ENCODE measurements at regions of chr1 and their contacts with region 1.

Region 1: DNA sequence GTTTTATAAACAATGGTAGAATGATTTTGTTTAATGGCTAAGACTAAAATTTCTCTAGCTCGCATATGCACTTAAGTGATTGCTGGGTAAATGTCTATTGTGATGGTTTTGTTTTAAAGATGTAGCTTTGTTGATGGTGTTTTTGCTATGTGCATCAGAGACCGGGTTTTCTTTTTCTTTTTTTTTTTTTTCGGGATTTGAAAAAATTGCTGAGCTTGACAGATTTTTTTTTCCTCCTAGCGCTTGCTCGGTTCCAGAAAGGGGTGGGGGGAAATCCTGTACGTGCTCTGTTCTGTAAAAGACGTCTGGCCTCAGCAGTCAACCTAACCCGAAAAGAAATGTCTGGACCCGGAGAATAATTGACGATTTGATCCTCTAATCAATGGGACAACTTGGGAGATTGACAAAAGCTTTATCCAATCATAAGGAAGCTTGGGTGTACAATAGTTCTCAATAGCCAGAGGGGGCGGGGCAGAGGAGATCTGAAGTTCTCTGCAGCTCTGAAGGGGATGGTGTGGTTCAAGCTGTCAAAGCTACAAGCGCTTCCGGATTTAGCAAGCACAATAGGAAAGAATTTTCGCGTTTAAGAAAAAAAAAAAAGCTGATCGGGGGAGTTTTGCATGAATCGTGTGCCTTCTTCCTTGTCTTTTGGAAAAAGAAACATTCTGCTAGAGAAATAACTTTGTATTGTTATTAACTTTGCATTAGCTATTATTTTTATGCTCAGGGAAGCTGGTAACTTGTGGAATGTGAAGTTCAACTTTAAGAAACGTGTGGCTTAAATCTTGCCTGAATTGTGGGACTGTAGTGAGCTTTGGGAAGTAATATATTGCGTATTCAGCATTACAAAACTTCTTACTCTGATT is 4.5 kb upstream of the NFIA start:
- DNase-seq: peak; percentile 84 to 88
- ATAC-seq: peak; percentile 47 to 55
- H3K4me3 ChIP-seq: peak overlapping the region; percentile 58 to 96 (median 73)
- H3K27ac ChIP-seq: peak overlapping the region; percentile 82 to 96 (median 92)
- H3K4me1 ChIP-seq: peaks cover 32 to 39% of the 10 kb centered on the region in 2 donors
- H3K27me3 ChIP-seq: no peaks in the 10 kb centered on the region
- CTCF ChIP-seq: no peak
- POLR2A ChIP-seq: peak in 1 of 2 donors; percentile 17

Region 2: GRCh38 chr1:60255565-60255964 is 822.3 kb before region 1 on chr1:
- in situ Hi-C with region 1: no loop called
- intact Hi-C with region 1: no loop called
- DNase-seq: no peak
- ATAC-seq: no peak
- H3K4me3 ChIP-seq: no peak overlapping the region
- H3K27ac ChIP-seq: no peak overlapping the region
- H3K4me1 ChIP-seq: no peaks in the 10 kb centered on the region
- H3K27me3 ChIP-seq: no peaks in the 10 kb centered on the region
- CTCF ChIP-seq: no peak
- POLR2A ChIP-seq: no peak

Region 3: DNA sequence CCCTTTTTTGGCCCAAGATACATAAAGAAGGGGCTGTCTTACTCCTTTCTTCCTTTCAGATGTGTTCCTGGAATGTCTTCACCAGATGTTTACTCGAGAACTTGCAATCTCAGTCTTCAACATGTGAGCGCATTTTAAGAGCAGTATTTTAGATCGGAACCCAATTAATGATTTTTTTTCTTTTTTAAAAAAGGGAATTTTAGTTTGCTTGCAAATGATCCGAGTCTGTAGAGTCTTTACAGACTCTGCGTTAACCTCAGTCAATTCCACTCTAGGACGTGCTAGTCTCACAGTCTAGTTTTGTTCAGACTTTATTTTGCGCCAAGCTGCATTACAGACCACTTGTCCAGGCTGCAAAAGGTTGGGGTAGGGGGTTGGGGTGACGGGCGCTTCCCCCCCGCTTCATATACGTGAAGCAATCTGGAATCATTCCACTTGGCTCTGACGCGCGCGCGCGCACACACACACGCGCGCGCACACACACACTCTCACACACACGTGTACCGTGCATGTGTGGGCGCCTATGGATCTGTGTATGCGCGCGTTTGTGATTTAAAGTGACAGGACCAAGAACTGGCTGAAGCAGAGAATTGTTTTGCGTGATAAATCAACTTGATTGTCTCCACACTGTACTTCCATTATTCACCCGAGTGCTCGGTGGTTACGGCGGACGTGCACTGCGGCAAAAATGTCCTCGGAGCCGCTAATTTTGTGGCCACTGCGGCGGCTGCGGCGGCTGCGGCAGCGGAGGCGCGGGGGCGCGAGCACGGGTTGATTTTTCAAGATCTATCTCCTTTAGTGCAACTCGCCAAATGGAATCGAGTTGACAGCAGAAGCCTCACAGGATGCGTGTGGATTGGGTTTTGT is 21.1 kb before region 1 on chr1:
- in situ Hi-C with region 1: no loop called
- intact Hi-C with region 1: loop called (anchors 1 kb)
- DNase-seq: peak in 1 of 2 donors; percentile 62
- ATAC-seq: peak; percentile 16 to 24
- H3K4me3 ChIP-seq: peak overlapping the region; percentile 68 to 93 (median 84)
- H3K27ac ChIP-seq: peak overlapping the region; percentile 92 to 100 (median 96)
- H3K4me1 ChIP-seq: peaks cover 29 to 38% of the 10 kb centered on the region in 2 donors
- H3K27me3 ChIP-seq: no peaks in the 10 kb centered on the region
- CTCF ChIP-seq: no peak
- POLR2A ChIP-seq: no peak

Region 4: DNA sequence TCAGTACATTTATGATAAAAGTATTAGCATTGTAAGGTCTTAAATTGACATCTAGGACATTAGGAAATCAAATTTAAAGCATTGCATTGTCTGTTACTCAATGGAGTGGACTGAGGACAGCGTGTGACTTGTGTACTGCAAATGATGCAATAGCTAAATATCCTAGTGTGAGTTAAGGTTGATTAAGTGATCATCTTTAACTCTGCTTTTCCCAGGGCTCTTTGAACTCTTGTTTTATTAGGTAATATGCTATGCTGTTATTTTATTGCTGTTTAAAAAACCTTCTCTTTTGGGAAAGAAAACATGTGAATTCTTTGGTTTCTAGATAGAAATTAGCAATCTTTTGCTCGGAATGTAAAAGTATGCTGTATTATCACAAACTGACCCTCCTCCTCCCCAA is 43.1 kb after region 1 on chr1:
- in situ Hi-C with region 1: no loop called
- intact Hi-C with region 1: loop called (anchors 1 kb)
- DNase-seq: peak; percentile 32 to 45
- ATAC-seq: peak; percentile 79 to 81
- H3K4me3 ChIP-seq: peak overlapping the region; percentile 35 to 46 (median 45)
- H3K27ac ChIP-seq: peak overlapping the region; percentile 81 to 93 (median 88)
- H3K4me1 ChIP-seq: peaks cover 86 to 91% of the 10 kb centered on the region in 2 donors
- H3K27me3 ChIP-seq: no peaks in the 10 kb centered on the region
- CTCF ChIP-seq: peak in 1 of 5 experiments; percentile 9
- POLR2A ChIP-seq: peak in 1 of 2 donors; percentile 9

Region 5: DNA sequence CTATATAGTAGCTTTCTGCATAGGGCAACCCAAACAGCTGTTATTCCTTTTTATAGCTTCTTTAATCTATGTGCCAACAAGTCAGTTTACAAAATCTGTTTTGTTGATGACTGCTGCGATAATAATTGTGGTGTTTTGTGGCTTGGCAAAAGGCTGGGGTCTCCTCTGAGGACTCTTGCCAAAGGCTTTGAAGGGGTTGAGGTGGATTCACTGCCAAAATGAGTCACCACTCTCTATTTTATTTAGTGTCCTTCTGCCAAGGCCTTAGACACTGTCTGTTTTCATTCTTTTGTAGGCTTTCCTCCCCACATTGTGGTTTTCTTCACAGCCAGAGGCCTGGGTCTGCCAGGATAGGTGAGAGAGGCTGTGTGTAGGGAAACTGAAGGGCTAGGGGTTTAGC is 166.2 kb after region 1 on chr1:
- in situ Hi-C with region 1: loop called in 1 of 4 experiments (anchors 25 kb)
- intact Hi-C with region 1: loop called (anchors 2 kb)
- DNase-seq: peak in 1 of 2 donors; percentile 31
- ATAC-seq: peak; percentile 23 to 58
- H3K4me3 ChIP-seq: no peak overlapping the region
- H3K27ac ChIP-seq: peak overlapping the region; percentile 83 to 89 (median 86)
- H3K4me1 ChIP-seq: peaks cover 69% of the 10 kb centered on the region in 2 donors
- H3K27me3 ChIP-seq: no peaks in the 10 kb centered on the region
- CTCF ChIP-seq: no peak
- POLR2A ChIP-seq: no peak

Region 6: DNA sequence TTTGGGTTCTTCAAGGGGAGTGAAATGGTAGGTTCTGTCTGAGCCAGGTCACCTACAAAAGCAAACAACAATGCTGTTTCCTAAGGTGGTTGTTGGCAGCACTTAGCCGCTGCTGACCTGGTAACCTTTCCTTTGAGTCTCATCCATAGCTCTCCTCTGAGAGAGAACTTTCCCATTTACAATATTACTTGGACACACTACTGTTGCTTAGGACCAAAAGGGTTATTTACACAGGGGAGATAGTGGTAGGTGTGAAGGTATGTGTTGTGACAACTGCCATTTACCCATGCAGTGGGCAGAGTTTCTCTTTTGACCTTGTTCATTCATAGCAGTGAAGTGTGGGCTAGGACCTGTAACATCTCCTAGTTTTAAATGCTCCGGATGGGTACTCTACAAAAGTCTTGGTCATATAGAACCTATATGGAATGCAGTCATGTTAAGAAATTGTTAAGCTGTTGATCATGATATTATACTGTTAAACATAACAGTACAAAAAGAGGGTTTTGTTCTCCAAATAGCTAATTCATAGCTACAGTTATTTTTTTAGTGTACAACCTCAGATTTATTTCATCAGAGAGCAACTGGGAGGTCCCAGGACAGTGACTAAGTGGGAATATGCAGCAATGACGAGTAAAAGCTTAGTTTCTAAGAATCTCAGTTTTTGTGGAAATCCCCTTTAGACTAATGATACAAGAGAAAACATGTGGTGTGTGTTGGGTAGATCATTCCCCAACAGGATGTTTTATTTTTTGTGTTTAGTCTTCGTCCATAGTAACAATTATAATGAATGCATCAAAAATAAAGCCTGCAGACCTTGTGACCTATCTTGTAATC is 224.1 kb after region 1 on chr1:
- in situ Hi-C with region 1: no loop called
- intact Hi-C with region 1: no loop called
- DNase-seq: no peak
- ATAC-seq: no peak
- H3K4me3 ChIP-seq: no peak overlapping the region
- H3K27ac ChIP-seq: peak overlapping the region; percentile 24 to 59 (median 42)
- H3K4me1 ChIP-seq: peaks cover 9 to 32% of the 10 kb centered on the region in 2 donors
- H3K27me3 ChIP-seq: no peaks in the 10 kb centered on the region
- CTCF ChIP-seq: no peak
- POLR2A ChIP-seq: no peak

Measured in gastrocnemius medialis (tissue), 4 donors.